ENCODE measurements at regions of chr1 and their contacts with region 1.

Region 1: GRCh38 chr1:32939655-32940371 is 24.8 kb downstream of the RNF19B start:
- DNase-seq: no peak
- ATAC-seq: no peak
- H3K4me3 ChIP-seq: no peak overlapping the region
- H3K27ac ChIP-seq: no peak overlapping the region
- H3K4me1 ChIP-seq: peaks cover 4 to 6% of the 10 kb centered on the region in 2 donors
- H3K27me3 ChIP-seq: no peaks in the 10 kb centered on the region
- CTCF ChIP-seq: no peak
- POLR2A ChIP-seq: no peak

Region 2: DNA sequence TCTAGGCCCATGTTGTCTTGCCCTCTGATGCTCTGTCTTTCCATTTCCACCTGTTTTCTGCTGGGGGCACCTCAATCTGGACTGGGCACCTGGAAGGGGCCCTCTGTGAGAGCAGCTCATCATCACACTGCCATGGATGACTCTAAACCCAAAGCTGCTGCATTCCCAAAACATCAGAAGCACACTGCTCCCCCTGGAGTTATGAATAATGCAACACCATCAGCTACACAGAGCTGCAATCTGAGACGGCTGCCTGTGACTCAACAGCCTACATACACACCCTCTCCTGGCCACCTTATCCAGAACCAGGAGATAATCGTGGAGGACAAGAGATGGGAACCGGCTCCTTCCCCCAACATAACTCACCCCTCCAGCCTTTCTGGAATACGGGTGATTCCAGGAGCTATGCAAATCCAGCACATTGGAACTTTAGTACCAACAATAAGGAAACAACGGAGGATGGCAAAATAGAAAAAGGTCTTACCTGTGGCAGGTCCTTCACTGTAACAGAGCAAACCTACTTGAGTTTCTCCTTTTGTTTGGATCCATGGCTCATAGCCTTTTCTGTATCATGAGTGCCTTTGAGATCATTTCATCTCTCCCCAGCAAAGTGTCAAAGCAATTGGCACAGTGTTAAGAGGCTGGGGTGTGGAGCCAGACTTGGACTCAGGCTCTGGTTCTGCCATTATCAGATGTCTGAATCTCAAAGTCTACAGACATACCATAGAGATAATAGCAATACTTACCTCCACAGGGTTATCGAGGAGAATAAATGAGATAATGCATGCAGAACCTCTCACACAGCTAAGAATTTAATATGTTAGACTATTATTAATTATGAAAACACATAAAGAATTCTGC is 67.6 kb after region 1 on chr1:
- in situ Hi-C with region 1: loop called in 1 of 4 experiments (anchors 10 kb)
- intact Hi-C with region 1: loop called (anchors 5 kb)
- DNase-seq: peak; percentile 42 to 68
- ATAC-seq: peak; percentile 86 to 90
- H3K4me3 ChIP-seq: no peak overlapping the region
- H3K27ac ChIP-seq: peak overlapping the region in 2 of 4 donors; percentile 44 to 51
- H3K4me1 ChIP-seq: peaks cover 38 to 58% of the 10 kb centered on the region in 2 donors
- H3K27me3 ChIP-seq: no peaks in the 10 kb centered on the region
- CTCF ChIP-seq: peak in 4 of 5 experiments; percentile 35 to 52 (median 46)
- POLR2A ChIP-seq: peak in 1 of 2 donors; percentile 19

Region 3: GRCh38 chr1:33072707-33073106 is 132.9 kb after region 1 on chr1:
- in situ Hi-C with region 1: loop called in 1 of 4 experiments (anchors 10 kb)
- intact Hi-C with region 1: no loop called
- DNase-seq: no peak
- ATAC-seq: no peak
- H3K4me3 ChIP-seq: no peak overlapping the region
- H3K27ac ChIP-seq: no peak overlapping the region
- H3K4me1 ChIP-seq: no peaks in the 10 kb centered on the region
- H3K27me3 ChIP-seq: no peaks in the 10 kb centered on the region
- CTCF ChIP-seq: no peak
- POLR2A ChIP-seq: no peak

Region 4: GRCh38 chr1:33080885-33081553 is 141.2 kb after region 1 on chr1 and contains the start of gene AZIN2:
- in situ Hi-C with region 1: loop called in 3 of 4 experiments (anchors 5 to 10 kb)
- intact Hi-C with region 1: no loop called
- DNase-seq: peak; percentile 93 to 94
- ATAC-seq: peak; percentile 97 to 99
- H3K4me3 ChIP-seq: peak within 1 kb of the TSS; percentile 63 to 80 (median 68)
- H3K27ac ChIP-seq: peak within 1 kb of the TSS in 3 of 4 donors; percentile 36 to 66 (median 57)
- H3K4me1 ChIP-seq: peaks cover 13 to 18% of the 10 kb centered on the region in 2 donors
- H3K27me3 ChIP-seq: no peaks in the 10 kb centered on the region
- CTCF ChIP-seq: no peak
- POLR2A ChIP-seq: peak; percentile 57 to 88
- total RNA-seq, gene AZIN2: 0.52 to 3.1 (median 1.2) TPM